ENCODE measurements at regions of chr1 and their contacts with region 1.

Region 1: GRCh38 chr1:10620776-10621175 is 146.0 kb downstream of the PEX14 start:
- DNase-seq: no peak
- H3K4me3 ChIP-seq: no peak overlapping the region
- H3K27ac ChIP-seq: no peak overlapping the region
- H3K4me1 ChIP-seq: no peaks in the 10 kb centered on the region
- H3K27me3 ChIP-seq: no peaks in the 10 kb centered on the region
- CTCF ChIP-seq: no peak
- POLR2A ChIP-seq: no peak

Region 2: GRCh38 chr1:10539411-10540043 is 81.2 kb before region 1 on chr1:
- intact Hi-C with region 1: loop called (anchors 5 kb)
- DNase-seq: no peak
- H3K4me3 ChIP-seq: no peak overlapping the region
- H3K27ac ChIP-seq: peak overlapping the region in 1 of 2 donors; percentile 23
- H3K4me1 ChIP-seq: no peaks in the 10 kb centered on the region
- H3K27me3 ChIP-seq: no peaks in the 10 kb centered on the region
- CTCF ChIP-seq: no peak
- POLR2A ChIP-seq: no peak